Calu3 (cell line): ENCODE measurements at regions of chr21 and their contacts with region 1.

Region 1: GRCh38 chr21:35400233-35400957 is 351.3 kb upstream of the RUNX1 start:
- DNase-seq: peak; percentile 44
- H3K4me3 Mint-ChIP-seq: no peak overlapping the region
- H3K27ac Mint-ChIP-seq: peak overlapping the region; percentile 70
- H3K4me1 Mint-ChIP-seq: peaks cover 33% of the 10 kb centered on the region
- H3K27me3 Mint-ChIP-seq: no peaks in the 10 kb centered on the region
- CTCF ChIP-seq: no peak

Region 2: DNA sequence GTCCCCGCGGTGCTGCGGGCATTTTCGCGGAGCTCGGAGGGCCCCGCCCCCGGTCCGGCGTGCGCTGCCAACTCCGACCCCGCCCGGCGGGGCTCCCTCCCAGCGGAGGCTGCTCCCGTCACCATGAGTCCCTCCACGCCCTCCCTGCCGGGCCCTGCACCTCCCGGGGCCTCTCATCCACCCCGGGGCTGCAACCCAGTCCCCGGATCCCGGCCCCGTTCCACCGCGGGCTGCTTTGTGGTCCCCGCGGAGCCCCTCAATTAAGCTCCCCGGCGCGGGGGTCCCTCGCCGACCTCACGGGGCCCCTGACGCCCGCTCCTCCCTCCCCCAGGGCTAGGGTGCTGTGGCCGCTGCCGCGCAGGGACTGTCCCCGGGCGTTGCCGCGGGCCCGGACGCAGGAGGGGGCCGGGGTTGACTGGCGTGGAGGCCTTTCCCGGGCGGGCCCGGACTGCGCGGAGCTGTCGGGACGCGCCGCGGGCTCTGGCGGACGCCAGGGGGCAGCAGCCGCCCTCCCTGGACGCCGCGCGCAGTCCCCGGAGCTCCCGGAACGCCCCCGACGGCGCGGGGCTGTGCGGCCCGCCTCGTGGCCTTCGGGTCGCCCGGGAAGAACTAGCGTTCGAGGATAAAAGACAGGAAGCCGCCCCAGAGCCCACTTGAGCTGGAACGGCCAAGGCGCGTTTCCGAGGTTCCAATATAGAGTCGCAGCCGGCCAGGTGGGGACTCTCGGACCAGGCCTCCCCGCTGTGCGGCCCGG is 510.5 kb before region 1 on chr21:
- CTCF ChIA-PET with region 1: interaction called, 5 read pairs
- intact Hi-C with region 1: loop called (anchors 2 kb)
- DNase-seq: peak; percentile 84
- H3K4me3 Mint-ChIP-seq: peak overlapping the region; percentile 65
- H3K27ac Mint-ChIP-seq: peak overlapping the region; percentile 66
- H3K4me1 Mint-ChIP-seq: no peaks in the 10 kb centered on the region
- H3K27me3 Mint-ChIP-seq: no peaks in the 10 kb centered on the region
- CTCF ChIP-seq: peak; percentile 63

Region 3: GRCh38 chr21:35138665-35139381 is 261.6 kb before region 1 on chr21:
- CTCF ChIA-PET with region 1: interaction called, 9 read pairs
- intact Hi-C with region 1: loop called (anchors 2 kb)
- DNase-seq: peak; percentile 78
- H3K4me3 Mint-ChIP-seq: no peak overlapping the region
- H3K27ac Mint-ChIP-seq: peak overlapping the region; percentile 95
- H3K4me1 Mint-ChIP-seq: peaks cover 39% of the 10 kb centered on the region
- H3K27me3 Mint-ChIP-seq: no peaks in the 10 kb centered on the region
- CTCF ChIP-seq: no peak

Region 4: DNA sequence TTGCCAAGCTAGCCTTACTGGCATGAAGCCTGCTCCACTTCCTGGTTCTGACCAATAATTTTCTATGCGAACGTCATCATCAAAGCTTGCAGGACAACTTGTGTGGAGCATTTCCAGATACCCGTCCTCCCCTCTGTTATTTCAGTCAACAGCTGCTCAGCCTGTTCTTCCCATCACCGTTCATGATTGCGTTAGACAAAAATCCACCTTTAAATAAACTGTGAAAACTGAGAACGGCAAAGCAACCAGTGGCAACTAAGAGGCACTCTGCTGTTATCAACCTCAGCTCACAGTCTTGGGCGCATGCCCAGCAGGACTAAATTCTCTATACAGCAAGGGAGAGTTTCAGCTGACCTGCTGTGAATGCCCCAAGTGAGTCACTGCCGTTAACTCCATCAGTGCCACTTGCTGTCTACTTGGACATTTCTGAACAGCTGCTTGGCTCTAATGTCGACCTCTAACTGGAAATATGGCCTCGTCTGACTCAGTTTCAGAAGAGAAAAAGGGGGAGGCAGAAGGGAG is 143.9 kb before region 1 on chr21:
- CTCF ChIA-PET with region 1: interaction called, 11 read pairs
- intact Hi-C with region 1: loop called (anchors 1 kb)
- DNase-seq: peak; percentile 82
- H3K4me3 Mint-ChIP-seq: peak overlapping the region; percentile 66
- H3K27ac Mint-ChIP-seq: peak overlapping the region; percentile 98
- H3K4me1 Mint-ChIP-seq: peaks cover 66% of the 10 kb centered on the region
- H3K27me3 Mint-ChIP-seq: no peaks in the 10 kb centered on the region
- CTCF ChIP-seq: no peak

Region 5: GRCh38 chr21:35366394-35367080 is 33.9 kb before region 1 on chr21:
- CTCF ChIA-PET with region 1: no interaction called
- intact Hi-C with region 1: no loop called
- DNase-seq: no peak
- H3K4me3 Mint-ChIP-seq: no peak overlapping the region
- H3K27ac Mint-ChIP-seq: no peak overlapping the region
- H3K4me1 Mint-ChIP-seq: no peaks in the 10 kb centered on the region
- H3K27me3 Mint-ChIP-seq: no peaks in the 10 kb centered on the region
- CTCF ChIP-seq: no peak

Region 6: GRCh38 chr21:35840197-35840799 is 439.9 kb after region 1 on chr21:
- CTCF ChIA-PET with region 1: interaction called, 11 read pairs
- intact Hi-C with region 1: loop called (anchors 10 kb)
- DNase-seq: peak; percentile 56
- H3K4me3 Mint-ChIP-seq: no peak overlapping the region
- H3K27ac Mint-ChIP-seq: no peak overlapping the region
- H3K4me1 Mint-ChIP-seq: no peaks in the 10 kb centered on the region
- H3K27me3 Mint-ChIP-seq: peaks cover 4% of the 10 kb centered on the region
- CTCF ChIP-seq: peak; percentile 65

Region 7: GRCh38 chr21:36730291-36731281 is 1330.2 kb after region 1 on chr21:
- CTCF ChIA-PET with region 1: no interaction called
- intact Hi-C with region 1: no loop called
- DNase-seq: no peak
- H3K4me3 Mint-ChIP-seq: no peak overlapping the region
- H3K27ac Mint-ChIP-seq: no peak overlapping the region
- H3K4me1 Mint-ChIP-seq: no peaks in the 10 kb centered on the region
- H3K27me3 Mint-ChIP-seq: no peaks in the 10 kb centered on the region
- CTCF ChIP-seq: no peak